ENCODE measurements at regions of chr11 and their contacts with region 1.

Region 1: GRCh38 chr11:47407746-47408590 is at the start of gene SLC39A13:
- DNase-seq: peak; percentile 88 to 94 (median 90)
- H3K4me3 ChIP-seq: peak within 1 kb of the TSS; percentile 34 to 73
- H3K4me3 Mint-ChIP-seq: peak within 1 kb of the TSS; percentile 89 to 97 (median 92)
- H3K27ac ChIP-seq: peak within 1 kb of the TSS; percentile 80
- H3K27ac Mint-ChIP-seq: peak within 1 kb of the TSS; percentile 92 to 97 (median 94)
- H3K4me1 ChIP-seq: peaks cover 25% of the 10 kb centered on the region
- H3K4me1 Mint-ChIP-seq: peaks cover 10 to 27% (median 20%) of the 10 kb centered on the region in 4 donors
- H3K27me3 ChIP-seq: no peaks in the 10 kb centered on the region
- H3K27me3 Mint-ChIP-seq: no peaks in the 10 kb centered on the region
- total RNA-seq, gene SLC39A13: 63.6 to 68.3 TPM

Region 2: DNA sequence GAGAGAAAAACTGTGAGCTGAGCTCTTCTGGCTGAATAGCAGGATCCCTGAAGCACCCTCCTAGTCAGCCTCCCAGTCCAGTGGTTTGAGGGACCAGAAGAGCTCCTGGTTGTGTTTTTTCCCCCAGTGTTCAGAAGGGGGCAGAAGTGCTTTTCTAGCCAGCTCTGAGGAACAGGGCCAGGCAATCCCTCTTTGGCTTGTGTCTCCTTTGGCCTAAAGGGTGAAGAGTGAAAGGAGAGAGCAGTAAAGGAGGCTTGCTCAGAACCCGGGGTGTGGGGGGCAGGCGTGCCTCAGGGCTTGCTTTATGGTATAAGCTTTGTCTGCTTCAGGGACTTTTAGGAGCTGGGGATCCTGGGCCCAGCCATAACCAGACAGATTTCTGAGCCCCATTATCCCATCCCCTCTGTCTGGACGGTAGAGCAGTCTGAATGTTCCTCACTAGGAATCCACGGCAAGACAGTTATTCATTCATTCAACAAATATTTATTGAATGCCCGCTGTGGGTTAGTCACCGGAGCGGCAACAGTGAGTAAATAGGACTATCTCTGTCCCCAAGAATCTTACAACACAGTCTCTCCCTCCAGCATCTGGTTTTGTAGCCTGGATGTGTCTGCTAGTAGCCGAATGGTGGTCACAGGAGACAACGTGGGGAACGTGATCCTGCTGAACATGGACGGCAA is 173.8 kb before region 1 on chr11:
- CTCF ChIA-PET with region 1: interaction called, 25 read pairs
- POLR2A ChIA-PET with region 1: interaction called, 6 read pairs
- intact Hi-C with region 1: no loop called
- DNase-seq: peak in 4 of 5 donors; percentile 11 to 61 (median 21)
- H3K4me3 ChIP-seq: no peak overlapping the region
- H3K4me3 Mint-ChIP-seq: peak overlapping the region; percentile 56 to 82 (median 70)
- H3K27ac ChIP-seq: peak overlapping the region; percentile 75
- H3K27ac Mint-ChIP-seq: peak overlapping the region; percentile 92 to 99 (median 97)
- H3K4me1 ChIP-seq: peaks cover 25% of the 10 kb centered on the region
- H3K4me1 Mint-ChIP-seq: peaks cover 7 to 32% (median 23%) of the 10 kb centered on the region in 4 donors
- H3K27me3 ChIP-seq: no peaks in the 10 kb centered on the region
- H3K27me3 Mint-ChIP-seq: no peaks in the 10 kb centered on the region

Region 3: DNA sequence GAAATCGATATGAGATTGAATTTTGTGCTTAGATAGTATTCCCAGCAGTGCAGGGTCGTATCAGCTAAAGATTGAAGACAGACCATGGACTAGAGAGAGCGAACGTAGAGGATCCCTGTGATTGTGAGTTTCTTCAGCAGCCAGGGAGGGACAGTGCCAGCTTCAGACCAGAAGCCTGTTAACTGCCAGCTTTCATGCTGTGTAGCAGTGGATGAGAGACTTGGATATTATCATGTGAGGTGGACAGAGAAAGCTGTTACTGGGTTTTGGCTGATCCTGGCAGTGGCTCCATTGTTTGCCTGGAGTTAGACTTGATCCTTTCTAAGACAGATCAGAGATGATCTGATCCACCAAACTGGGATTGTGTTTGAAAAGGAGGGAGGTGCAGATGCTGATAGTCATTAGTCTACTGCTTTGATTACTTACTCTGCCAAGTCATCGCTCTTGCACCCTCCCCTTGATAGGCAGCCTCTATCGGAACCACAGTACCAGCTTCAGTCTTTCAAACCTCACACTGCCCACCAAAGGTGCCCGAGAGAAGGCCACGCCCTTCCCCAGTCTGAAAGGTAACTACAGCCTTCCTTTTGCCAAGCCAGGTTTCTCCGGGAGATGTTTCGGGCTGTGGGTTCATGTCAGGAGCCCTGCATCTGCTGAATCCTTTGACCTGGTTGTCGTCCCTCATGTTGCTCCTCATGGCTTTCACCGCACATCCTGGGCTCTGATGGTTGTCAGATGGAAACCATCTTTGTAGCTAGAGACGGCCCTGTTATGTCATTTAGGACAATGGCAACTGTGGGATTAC is 121.8 kb before region 1 on chr11:
- CTCF ChIA-PET with region 1: no interaction called
- POLR2A ChIA-PET with region 1: no interaction called
- intact Hi-C with region 1: no loop called
- DNase-seq: no peak
- H3K4me3 ChIP-seq: no peak overlapping the region
- H3K4me3 Mint-ChIP-seq: no peak overlapping the region
- H3K27ac ChIP-seq: no peak overlapping the region
- H3K27ac Mint-ChIP-seq: peak overlapping the region in 3 of 7 donors; percentile 25 to 63 (median 46)
- H3K4me1 ChIP-seq: no peaks in the 10 kb centered on the region
- H3K4me1 Mint-ChIP-seq: peaks cover 0 to 1% (median 0%) of the 10 kb centered on the region in 4 donors
- H3K27me3 ChIP-seq: no peaks in the 10 kb centered on the region
- H3K27me3 Mint-ChIP-seq: no peaks in the 10 kb centered on the region

Region 4: DNA sequence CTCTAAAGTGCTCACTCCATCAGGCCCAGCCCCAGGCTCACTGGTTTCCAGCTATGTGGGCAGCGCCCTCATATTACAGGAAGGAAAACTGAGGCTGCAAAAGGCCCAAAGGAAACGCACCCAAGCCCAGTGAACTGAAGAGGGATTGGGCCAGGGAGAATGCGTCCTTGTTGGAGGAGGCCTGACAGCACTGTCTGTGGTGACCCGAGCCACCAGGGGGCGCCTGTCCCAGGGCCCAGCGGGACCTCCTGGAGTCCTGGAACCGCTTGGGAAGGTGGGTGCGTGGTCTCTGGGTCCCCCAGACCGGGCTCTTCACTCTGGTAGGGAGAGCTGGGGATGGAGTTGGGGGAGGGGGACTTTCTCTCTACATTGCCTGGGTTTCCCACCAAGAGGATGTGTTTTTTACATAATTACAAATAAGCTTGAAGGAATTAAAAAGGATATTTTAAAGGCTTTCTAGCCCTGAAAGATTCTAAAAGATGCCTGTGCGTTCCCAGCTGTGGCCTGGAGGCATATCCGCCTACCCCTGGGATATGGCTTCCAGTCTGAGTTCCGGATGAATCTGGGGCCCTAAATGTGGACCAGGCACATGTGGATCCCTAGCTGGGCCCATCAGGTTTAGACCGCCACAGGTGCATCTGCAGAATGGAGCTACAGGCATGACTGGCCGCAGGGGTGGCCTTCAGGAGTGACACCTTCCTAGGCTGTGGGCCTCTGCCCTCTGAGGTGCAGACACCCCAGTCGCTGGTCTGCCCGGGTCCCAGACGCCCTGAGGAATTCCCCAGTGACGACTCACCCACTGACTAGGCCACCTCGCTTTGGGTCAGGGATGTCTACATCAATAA is 33.9 kb before region 1 on chr11:
- CTCF ChIA-PET with region 1: interaction called, 257 read pairs
- POLR2A ChIA-PET with region 1: interaction called, 75 read pairs
- intact Hi-C with region 1: loop called (anchors 1 kb)
- DNase-seq: peak; percentile 78 to 83 (median 80)
- H3K4me3 ChIP-seq: no peak overlapping the region
- H3K4me3 Mint-ChIP-seq: no peak overlapping the region
- H3K27ac ChIP-seq: no peak overlapping the region
- H3K27ac Mint-ChIP-seq: peak overlapping the region in 1 of 7 donors; percentile 52
- H3K4me1 ChIP-seq: peaks cover 7% of the 10 kb centered on the region
- H3K4me1 Mint-ChIP-seq: peaks cover 0 to 8% (median 3%) of the 10 kb centered on the region in 4 donors
- H3K27me3 ChIP-seq: no peaks in the 10 kb centered on the region
- H3K27me3 Mint-ChIP-seq: no peaks in the 10 kb centered on the region

Region 5: GRCh38 chr11:47426061-47426956 is 18.3 kb after region 1 on chr11 and contains the start of gene PSMC3:
- CTCF ChIA-PET with region 1: interaction called, 59 read pairs
- POLR2A ChIA-PET with region 1: interaction called, 72 read pairs
- intact Hi-C with region 1: loop called (anchors 1 kb)
- DNase-seq: peak; percentile 94 to 97 (median 96)
- H3K4me3 ChIP-seq: peak within 1 kb of the TSS; percentile 64 to 91
- H3K4me3 Mint-ChIP-seq: peak within 1 kb of the TSS; percentile 99 to 100 (median 100)
- H3K27ac ChIP-seq: peak within 1 kb of the TSS; percentile 85
- H3K27ac Mint-ChIP-seq: peak within 1 kb of the TSS; percentile 92 to 99 (median 99)
- H3K4me1 ChIP-seq: peaks cover 18% of the 10 kb centered on the region
- H3K4me1 Mint-ChIP-seq: peaks cover 12 to 32% (median 22%) of the 10 kb centered on the region in 4 donors
- H3K27me3 ChIP-seq: no peaks in the 10 kb centered on the region
- H3K27me3 Mint-ChIP-seq: no peaks in the 10 kb centered on the region
- total RNA-seq, gene PSMC3: 53.9 to 59.6 TPM

Region 6: DNA sequence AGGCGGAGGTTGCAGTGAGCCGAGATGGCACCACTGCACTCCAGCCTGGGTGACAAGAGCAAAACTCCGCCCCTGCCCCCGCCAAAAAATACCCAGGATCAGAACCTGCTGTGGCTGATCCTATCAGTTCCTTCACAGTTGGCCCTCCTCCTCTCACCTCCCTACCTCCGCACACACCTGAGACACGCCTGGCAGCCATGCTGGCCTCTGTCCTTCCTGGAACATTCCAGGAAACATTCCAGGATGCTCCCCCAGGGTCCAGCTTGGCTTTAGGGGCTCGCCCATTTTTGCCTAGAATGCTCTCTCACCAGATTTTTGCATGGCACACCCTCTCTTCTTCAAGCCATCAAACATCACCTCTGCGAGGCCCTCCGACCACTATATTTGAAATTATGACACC is 38.9 kb after region 1 on chr11:
- CTCF ChIA-PET with region 1: no interaction called
- POLR2A ChIA-PET with region 1: no interaction called
- intact Hi-C with region 1: no loop called
- DNase-seq: no peak
- H3K4me3 ChIP-seq: no peak overlapping the region
- H3K4me3 Mint-ChIP-seq: no peak overlapping the region
- H3K27ac ChIP-seq: no peak overlapping the region
- H3K27ac Mint-ChIP-seq: no peak overlapping the region
- H3K4me1 ChIP-seq: no peaks in the 10 kb centered on the region
- H3K4me1 Mint-ChIP-seq: no peaks in the 10 kb centered on the region
- H3K27me3 ChIP-seq: no peaks in the 10 kb centered on the region
- H3K27me3 Mint-ChIP-seq: no peaks in the 10 kb centered on the region

Region 7: GRCh38 chr11:47587723-47588326 is 179.9 kb after region 1 on chr11:
- CTCF ChIA-PET with region 1: no interaction called
- POLR2A ChIA-PET with region 1: no interaction called
- intact Hi-C with region 1: no loop called
- DNase-seq: no peak
- H3K4me3 ChIP-seq: no peak overlapping the region
- H3K4me3 Mint-ChIP-seq: no peak overlapping the region
- H3K27ac ChIP-seq: no peak overlapping the region
- H3K27ac Mint-ChIP-seq: peak overlapping the region in 1 of 7 donors; percentile 18
- H3K4me1 ChIP-seq: no peaks in the 10 kb centered on the region
- H3K4me1 Mint-ChIP-seq: peaks cover 0 to 4% (median 3%) of the 10 kb centered on the region in 4 donors
- H3K27me3 ChIP-seq: peaks cover 5% of the 10 kb centered on the region
- H3K27me3 Mint-ChIP-seq: peaks cover 0 to 5% of the 10 kb centered on the region in 2 donors

Measured in CD4-positive, alpha-beta memory T cell (primary cell).